PC-9 (cell line): ENCODE measurements at regions of chrX and their contacts with region 1.

Region 1: GRCh38 chrX:142089198-142089597 is 115.9 kb downstream of the MAGEC2 start:
- DNase-seq: no peak
- H3K4me3 ChIP-seq: no peak overlapping the region
- H3K27ac ChIP-seq: no peak overlapping the region
- H3K4me1 ChIP-seq: no peaks in the 10 kb centered on the region
- H3K27me3 ChIP-seq: no peaks in the 10 kb centered on the region
- CTCF ChIP-seq: peak; percentile 60

Region 2: GRCh38 chrX:141941234-141941633 is 148.0 kb before region 1 on chrX:
- CTCF ChIA-PET with region 1: no interaction called
- POLR2A ChIA-PET with region 1: no interaction called
- intact Hi-C with region 1: loop called (anchors 10 kb)
- DNase-seq: no peak
- H3K4me3 ChIP-seq: no peak overlapping the region
- H3K27ac ChIP-seq: no peak overlapping the region
- H3K4me1 ChIP-seq: peaks cover 11% of the 10 kb centered on the region; the same call in 1 of the 2 replicates
- H3K27me3 ChIP-seq: no peaks in the 10 kb centered on the region
- CTCF ChIP-seq: no peak